Body of pancreas (tissue), 4 donors: ENCODE measurements at regions of chr13 and their contacts with region 1.

Region 1: GRCh38 chr13:101144808-101145419 is 271.4 kb downstream of the NALCN start:
- DNase-seq: peak in 1 of 4 donors; percentile 10
- ATAC-seq: peak; percentile 50
- H3K4me3 ChIP-seq: no peak overlapping the region
- H3K27ac ChIP-seq: no peak overlapping the region
- H3K4me1 ChIP-seq: no peaks in the 10 kb centered on the region
- H3K27me3 ChIP-seq: no peaks in the 10 kb centered on the region
- CTCF ChIP-seq: peak; percentile 38 to 83 (median 77)
- POLR2A ChIP-seq: no peak

Region 2: GRCh38 chr13:100987953-100988352 is 157.0 kb before region 1 on chr13:
- intact Hi-C with region 1: no loop called
- DNase-seq: peak in 1 of 4 donors; percentile 5
- ATAC-seq: no peak
- H3K4me3 ChIP-seq: no peak overlapping the region
- H3K27ac ChIP-seq: no peak overlapping the region
- H3K4me1 ChIP-seq: no peaks in the 10 kb centered on the region
- H3K27me3 ChIP-seq: no peaks in the 10 kb centered on the region
- CTCF ChIP-seq: peak in 3 of 7 experiments; percentile 17 to 25 (median 18)
- POLR2A ChIP-seq: no peak

Region 3: DNA sequence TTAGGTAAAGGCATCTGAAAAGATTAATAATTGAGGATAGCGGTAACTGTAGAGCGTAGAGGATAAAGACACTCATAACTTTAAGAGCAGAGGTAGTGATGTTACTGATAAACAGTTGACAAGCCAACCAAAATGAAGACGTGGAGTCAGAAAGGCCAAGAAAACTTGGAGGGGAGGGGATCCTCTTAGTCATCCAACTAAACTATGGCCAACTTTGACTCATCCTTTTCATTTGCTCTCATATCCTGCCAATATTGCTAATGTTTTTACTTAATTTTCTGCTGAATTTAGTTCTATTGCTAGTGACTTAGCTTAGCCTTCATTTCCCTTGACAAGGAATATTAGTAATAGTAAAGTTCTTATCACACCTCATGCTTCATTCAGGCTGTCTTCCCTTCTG is 321.0 kb after region 1 on chr13:
- intact Hi-C with region 1: loop called (anchors 10 kb)
- DNase-seq: no peak
- ATAC-seq: no peak
- H3K4me3 ChIP-seq: no peak overlapping the region
- H3K27ac ChIP-seq: no peak overlapping the region
- H3K4me1 ChIP-seq: no peaks in the 10 kb centered on the region
- H3K27me3 ChIP-seq: no peaks in the 10 kb centered on the region
- CTCF ChIP-seq: no peak
- POLR2A ChIP-seq: no peak